ENCODE measurements at regions of chr5 and their contacts with region 1.

Region 1: DNA sequence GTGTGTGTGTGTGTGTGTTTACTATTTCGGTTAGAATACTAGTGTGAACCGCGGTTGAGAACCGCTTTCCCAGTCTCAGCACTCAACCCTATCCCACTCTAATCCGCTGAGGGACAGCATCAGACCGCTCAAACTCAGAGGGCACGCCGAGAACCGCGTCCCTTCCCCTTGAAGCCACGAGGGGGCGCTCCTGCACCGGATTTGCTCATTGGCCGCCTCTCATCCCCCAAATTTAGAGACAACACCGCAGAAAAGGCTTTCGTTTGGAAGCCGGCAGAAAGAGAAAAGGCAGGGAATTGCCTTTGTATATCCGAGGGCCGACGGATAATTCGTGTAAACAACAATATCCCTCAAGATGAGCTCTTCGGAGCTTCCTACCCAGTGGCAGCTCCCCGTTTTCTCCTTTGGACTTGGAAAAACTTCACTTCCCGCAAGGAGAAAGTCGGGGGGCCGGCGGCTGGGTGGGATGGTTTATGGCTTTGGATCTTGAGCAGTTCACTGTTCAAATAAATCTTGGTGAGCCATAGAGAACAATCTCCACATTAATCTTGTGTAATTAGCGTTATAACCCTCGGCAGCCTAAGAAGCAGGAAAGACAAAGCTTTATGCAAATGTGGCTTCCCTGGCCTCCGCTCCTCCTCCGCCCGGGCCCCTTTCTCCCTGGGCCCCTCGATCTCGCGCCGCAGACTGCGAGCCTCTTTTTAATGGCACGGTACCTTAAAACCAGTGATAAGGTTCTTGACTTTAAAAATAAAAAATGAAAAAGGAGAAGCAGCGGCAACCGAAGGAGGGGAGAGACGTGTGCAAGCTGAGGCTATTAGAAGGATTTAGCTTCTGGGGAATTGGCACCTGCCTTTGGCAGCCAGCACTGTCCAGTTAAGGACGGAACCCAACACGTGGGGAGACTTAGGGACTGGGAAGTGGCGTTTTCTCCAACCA is 296.8 kb downstream of the PARP8 start:
- DNase-seq: peak; percentile 78
- ATAC-seq: peak; percentile 74

Region 2: GRCh38 chr5:50535393-50535792 is 427.8 kb before region 1 on chr5:
- intact Hi-C with region 1: no loop called
- DNase-seq: no peak
- ATAC-seq: no peak

Region 3: GRCh38 chr5:52007230-52007858 is 1044.1 kb after region 1 on chr5:
- intact Hi-C with region 1: loop called (anchors 5 kb)
- DNase-seq: no peak
- ATAC-seq: peak; percentile 46

Region 4: GRCh38 chr5:52657247-52657645 is 1694.0 kb after region 1 on chr5:
- intact Hi-C with region 1: loop called (anchors 2 kb)
- DNase-seq: no peak
- ATAC-seq: no peak